ENCODE measurements at regions of chr21 and their contacts with region 1.

Region 1: GRCh38 chr21:31180256-31181081 is 142.2 kb upstream of the KRTAP19-8 start:
- DNase-seq: peak in 1 of 10 donors; percentile 24

Region 2: DNA sequence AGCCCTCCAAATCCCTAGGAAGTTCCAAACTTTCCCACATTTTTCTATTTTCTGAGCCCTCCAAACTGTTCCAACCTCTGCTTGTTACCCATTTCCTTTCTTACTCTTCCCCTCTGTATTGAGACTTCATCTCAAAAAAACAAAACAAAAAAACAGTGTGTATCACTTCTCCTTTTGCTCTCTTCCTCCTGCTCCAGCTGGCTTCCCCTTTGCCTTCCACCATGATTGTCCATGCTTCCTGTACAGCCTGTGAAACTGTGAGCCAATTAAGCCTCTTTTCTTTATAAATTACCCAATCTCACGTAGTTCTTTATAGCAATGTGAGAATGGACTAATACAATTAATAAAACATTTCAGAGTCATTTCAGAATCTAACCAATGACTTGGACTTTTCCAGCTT is 72.6 kb before region 1 on chr21:
- intact Hi-C with region 1: loop called (anchors 1 kb)
- DNase-seq: no peak

Region 3: GRCh38 chr21:31370893-31371544 is 190.6 kb after region 1 on chr21:
- intact Hi-C with region 1: no loop called
- DNase-seq: peak in 1 of 10 donors; percentile 70